ENCODE measurements at regions of chr20 and their contacts with region 1.

Region 1: DNA sequence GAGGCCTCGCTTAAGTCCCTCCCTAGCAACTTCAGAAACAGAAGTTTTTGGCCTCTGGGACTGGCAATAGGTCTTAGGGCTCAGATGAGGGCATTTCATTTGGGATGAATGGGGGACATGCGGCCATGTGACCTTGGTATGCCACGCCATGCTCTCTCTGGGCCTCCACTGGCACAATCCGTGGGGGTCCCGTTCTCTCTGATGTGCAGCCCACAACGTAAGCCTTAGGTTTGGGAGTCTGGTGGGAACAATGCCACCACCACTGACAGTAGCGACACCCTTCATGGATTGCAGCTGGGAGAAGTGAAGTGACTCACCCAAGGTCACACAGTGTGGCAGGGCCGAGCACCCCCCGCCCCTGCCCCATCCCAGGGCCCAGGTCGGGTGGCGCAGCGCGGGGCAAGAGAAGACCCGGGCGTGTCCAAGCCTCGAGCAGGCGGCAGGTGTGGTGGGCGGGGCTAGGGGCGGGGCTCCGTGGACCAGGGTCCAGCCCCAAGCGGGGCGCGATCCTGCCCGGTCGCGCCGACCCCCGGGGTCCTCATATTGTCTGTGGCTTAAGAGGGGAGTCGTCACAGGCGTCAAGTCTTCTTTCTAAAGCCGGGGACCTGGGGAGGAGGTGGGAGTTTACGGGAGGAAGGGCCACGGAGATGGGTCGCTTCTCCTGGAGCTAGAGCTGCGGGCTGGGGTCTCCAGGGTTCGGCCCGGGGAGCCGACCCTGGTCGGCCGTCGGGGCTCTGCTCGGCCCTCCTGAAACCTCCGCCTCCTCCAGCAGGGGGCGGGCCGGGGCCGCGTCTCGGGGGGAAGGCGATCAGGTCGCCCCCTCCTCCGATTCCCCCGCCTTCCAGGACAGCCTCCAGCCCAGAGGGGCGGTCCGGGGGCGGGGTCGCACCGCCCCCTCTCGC is 698 bp upstream of the CEBPB start:
- DNase-seq: peak; percentile 78
- H3K4me3 Mint-ChIP-seq: peak overlapping the region; percentile 39
- H3K27ac Mint-ChIP-seq: no peak overlapping the region
- H3K4me1 Mint-ChIP-seq: peaks cover 25% of the 10 kb centered on the region
- H3K27me3 Mint-ChIP-seq: peaks cover 10% of the 10 kb centered on the region

Region 2: DNA sequence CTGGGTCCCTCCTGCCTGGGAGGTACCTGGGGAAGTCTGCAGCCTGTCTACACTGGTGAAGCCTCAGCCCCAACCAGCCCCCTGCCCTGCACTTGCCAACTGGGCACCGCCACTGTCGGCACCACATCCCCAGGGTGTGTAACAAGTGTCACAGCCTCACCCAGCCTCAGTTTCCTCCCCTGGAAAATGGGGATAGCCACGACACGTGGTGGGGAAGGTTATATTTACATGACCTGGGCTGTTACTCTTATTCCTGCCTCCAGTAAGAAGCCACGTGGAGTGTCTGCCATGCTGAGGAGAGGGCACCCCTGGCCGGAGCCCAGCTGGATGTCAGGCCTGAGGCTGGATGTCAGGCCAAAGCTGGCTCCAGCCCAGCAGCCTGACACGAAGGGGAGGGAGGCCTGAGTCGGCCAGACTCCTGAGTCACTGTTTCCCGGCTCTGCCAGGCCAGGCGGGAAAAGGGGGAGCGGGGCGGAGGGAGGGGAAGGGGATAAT is 162.3 kb before region 1 on chr20:
- intact Hi-C with region 1: no loop called
- DNase-seq: no peak
- H3K4me3 Mint-ChIP-seq: no peak overlapping the region
- H3K27ac Mint-ChIP-seq: no peak overlapping the region
- H3K4me1 Mint-ChIP-seq: no peaks in the 10 kb centered on the region
- H3K27me3 Mint-ChIP-seq: peaks cover 2% of the 10 kb centered on the region

Region 3: GRCh38 chr20:50087229-50087821 is 102.6 kb before region 1 on chr20:
- intact Hi-C with region 1: no loop called
- DNase-seq: no peak
- H3K4me3 Mint-ChIP-seq: no peak overlapping the region
- H3K27ac Mint-ChIP-seq: no peak overlapping the region
- H3K4me1 Mint-ChIP-seq: peaks cover 21% of the 10 kb centered on the region
- H3K27me3 Mint-ChIP-seq: no peaks in the 10 kb centered on the region

Region 4: GRCh38 chr20:50286609-50287008 is 96.7 kb after region 1 on chr20:
- intact Hi-C with region 1: loop called (anchors 5 kb)
- DNase-seq: no peak
- H3K4me3 Mint-ChIP-seq: no peak overlapping the region
- H3K27ac Mint-ChIP-seq: no peak overlapping the region
- H3K4me1 Mint-ChIP-seq: peaks cover 31% of the 10 kb centered on the region
- H3K27me3 Mint-ChIP-seq: no peaks in the 10 kb centered on the region

Region 5: DNA sequence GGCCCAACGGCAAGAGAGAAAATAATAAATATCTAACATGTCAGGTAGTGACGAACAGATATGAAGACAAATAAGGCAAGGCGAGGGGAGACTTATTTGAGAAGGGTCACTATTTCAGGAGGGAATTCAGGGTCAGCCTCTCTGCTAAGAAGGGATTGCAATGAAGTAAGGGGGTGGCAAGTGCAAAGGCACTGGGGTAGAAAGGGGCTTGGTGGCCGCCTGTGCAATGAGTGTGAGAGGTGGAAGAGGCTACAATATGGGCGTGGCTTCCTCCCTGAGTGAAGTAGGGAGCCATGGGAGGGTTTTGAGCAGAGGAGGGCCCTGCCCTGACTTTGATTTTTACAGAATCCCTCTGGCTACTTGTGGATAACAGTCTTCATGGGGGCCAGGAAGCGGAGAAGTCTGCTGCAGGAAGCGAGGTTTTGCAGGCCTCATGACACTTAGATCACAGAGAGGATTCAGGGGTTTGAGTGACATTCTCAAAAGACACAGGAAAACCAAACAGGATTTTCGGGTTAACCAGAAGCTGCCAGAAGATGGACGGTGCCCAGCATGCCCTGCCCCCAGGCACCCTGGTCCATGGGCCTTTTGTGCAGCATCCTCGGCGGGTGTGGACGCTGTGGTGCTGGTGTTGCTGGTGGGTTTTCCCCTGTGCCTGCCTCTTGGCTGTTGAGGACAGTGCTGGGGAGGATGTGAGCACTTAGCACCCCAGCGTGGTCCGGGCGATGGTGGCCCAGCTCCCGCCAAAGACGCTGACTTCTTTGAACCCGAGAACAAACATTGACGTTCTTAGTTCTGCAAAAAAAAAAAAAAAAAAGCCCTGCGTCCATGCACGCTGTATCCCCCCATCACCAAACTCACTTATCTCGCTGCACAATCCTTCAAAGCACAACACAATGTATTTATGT is 196.1 kb after region 1 on chr20:
- intact Hi-C with region 1: loop called (anchors 5 kb)
- DNase-seq: peak; percentile 65
- H3K4me3 Mint-ChIP-seq: peak overlapping the region; percentile 52
- H3K27ac Mint-ChIP-seq: peak overlapping the region; percentile 72
- H3K4me1 Mint-ChIP-seq: peaks cover 66% of the 10 kb centered on the region
- H3K27me3 Mint-ChIP-seq: peaks cover 5% of the 10 kb centered on the region

Region 6: DNA sequence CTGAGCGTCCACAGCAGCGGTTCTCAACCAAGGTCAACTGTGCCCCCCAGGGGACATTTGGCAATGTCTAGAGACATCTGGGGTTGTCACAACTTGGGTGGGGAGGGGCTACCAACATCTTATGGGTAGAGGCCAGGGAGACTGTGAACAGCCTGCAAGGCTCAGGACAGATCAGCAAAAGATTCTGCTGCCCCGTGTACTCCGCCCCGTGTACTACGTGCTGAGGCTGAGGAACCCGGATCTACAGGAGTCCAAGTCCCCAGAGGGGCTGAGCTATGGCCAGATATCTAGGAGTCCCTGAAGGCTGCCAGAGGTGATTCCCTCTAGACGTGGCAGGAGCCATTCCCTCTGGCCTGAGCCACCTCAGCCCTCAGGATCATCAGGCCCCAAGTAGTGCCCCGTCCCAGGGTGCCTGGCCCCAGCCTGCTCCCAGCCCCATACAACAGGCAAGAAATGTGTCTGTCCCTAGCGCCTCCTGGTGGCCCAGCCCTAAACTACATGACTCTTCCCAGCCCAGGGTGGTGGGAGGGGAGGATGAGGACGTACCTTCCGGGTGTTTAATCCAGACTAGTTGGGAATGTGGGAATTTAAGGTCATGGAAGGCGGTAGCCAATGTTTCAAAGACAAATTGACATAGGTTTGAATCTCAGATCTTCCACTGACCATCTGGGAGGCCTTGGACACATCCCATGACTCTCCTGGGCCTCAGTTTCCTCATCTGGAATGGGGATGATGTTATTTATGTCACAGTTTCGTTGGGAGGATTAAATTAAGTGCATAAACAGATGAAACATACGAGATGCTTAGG is 270.7 kb after region 1 on chr20:
- intact Hi-C with region 1: loop called (anchors 1 kb)
- DNase-seq: peak; percentile 72
- H3K4me3 Mint-ChIP-seq: no peak overlapping the region
- H3K27ac Mint-ChIP-seq: no peak overlapping the region
- H3K4me1 Mint-ChIP-seq: peaks cover 7% of the 10 kb centered on the region
- H3K27me3 Mint-ChIP-seq: no peaks in the 10 kb centered on the region

Region 7: DNA sequence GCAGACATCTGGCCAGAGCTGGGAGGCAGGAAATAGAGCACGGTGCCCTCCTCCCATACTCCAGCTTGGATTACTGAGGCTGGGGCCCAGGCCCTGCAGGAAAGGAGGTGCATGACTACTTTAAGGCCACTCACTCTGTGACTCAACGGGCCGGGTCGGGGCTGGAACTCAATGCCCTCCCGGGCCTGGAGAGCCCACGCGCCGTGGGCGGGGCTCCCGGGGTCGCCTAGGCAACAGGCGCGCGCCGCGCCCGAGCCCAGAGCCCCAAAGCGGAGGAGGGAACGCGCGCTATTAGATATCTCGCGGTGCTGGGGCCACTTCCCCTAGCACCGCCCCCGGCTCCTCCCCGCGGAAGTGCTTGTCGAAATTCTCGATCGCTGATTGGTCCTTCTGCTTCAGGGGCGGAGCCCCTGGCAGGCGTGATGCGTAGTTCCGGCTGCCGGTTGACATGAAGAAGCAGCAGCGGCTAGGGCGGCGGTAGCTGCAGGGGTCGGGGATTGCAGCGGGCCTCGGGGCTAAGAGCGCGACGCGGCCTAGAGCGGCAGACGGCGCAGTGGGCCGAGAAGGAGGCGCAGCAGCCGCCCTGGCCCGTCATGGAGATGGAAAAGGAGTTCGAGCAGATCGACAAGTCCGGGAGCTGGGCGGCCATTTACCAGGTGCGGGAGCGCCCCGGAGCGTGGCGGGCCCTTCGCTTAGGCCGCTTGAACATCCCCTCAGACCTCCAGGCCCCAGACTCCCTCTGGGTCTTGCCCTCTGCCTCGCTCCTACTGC is 320.2 kb after region 1 on chr20 and contains the start of gene PTPN1:
- intact Hi-C with region 1: loop called (anchors 2 kb)
- DNase-seq: peak; percentile 99
- H3K4me3 Mint-ChIP-seq: peak within 1 kb of the TSS; percentile 93
- H3K27ac Mint-ChIP-seq: peak within 1 kb of the TSS; percentile 86
- H3K4me1 Mint-ChIP-seq: peaks cover 43% of the 10 kb centered on the region
- H3K27me3 Mint-ChIP-seq: no peaks in the 10 kb centered on the region
- total RNA-seq, gene PTPN1: 93.2 and 94.6 TPM in 2 replicates

Region 8: DNA sequence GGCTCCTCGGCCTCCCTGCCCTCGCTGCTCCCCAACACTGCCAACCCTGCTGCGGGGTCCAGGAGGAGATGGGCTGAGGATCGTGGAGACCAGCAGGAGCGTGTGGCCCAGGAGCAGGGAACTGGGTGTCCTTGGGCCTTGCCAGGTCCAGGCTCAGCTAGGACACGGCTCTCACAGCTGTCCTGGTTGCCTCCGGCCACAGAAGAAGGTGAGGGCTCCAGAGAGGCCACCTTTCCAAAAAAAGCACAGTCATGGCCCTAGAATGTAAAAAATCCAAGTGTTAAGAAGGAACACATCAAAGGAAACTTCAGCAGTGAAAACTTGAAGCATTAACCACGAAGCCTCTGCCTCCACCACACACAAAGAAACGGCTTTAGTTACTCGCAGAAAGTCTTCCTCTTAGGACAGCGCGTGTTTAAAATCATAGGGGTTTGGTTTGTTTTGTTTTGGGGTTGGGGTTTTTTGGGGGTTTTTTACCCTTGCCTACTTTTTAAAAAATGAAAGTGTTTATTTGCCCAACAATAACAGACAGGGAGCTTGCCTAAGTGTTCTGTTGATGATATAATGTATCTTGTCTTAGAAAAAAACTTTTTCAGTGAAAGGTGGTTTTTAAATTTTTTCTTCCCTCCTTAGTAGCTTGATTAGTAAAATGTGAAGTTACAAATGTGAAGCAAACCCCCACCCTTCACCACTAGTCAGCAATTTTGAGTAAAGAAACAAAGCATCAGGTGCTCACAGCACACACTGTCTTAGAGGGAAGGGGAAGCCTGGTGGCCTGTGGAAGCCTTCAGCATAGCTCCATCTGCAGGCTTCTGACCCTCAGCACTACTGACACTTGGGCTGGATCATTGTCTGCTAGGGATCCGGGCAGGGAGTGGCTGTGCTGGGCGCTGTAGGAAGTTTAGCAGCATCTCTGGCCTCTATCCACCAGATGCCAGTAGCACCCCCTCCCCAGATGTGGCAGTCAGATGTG is 380.2 kb after region 1 on chr20:
- intact Hi-C with region 1: loop called (anchors 5 kb)
- DNase-seq: peak; percentile 40
- H3K4me3 Mint-ChIP-seq: peak overlapping the region; percentile 34
- H3K27ac Mint-ChIP-seq: peak overlapping the region; percentile 85
- H3K4me1 Mint-ChIP-seq: peaks cover 59% of the 10 kb centered on the region
- H3K27me3 Mint-ChIP-seq: no peaks in the 10 kb centered on the region

Measured in activated T-helper 2 cell treated with anti-CD3 and anti-CD28 coated beads, Interferon-gamma antibody, Interleukin-2, Interleukin-4, amounts not matched to agents 10 μg/mL and 5 μg/mL and 100 μg/mL, durations not matched to agents 14 hours and 24 hours and 36 hours (primary cell).